Ovary (tissue), 10 donors: ENCODE measurements at regions of chr9 and their contacts with region 1.

Region 1: DNA sequence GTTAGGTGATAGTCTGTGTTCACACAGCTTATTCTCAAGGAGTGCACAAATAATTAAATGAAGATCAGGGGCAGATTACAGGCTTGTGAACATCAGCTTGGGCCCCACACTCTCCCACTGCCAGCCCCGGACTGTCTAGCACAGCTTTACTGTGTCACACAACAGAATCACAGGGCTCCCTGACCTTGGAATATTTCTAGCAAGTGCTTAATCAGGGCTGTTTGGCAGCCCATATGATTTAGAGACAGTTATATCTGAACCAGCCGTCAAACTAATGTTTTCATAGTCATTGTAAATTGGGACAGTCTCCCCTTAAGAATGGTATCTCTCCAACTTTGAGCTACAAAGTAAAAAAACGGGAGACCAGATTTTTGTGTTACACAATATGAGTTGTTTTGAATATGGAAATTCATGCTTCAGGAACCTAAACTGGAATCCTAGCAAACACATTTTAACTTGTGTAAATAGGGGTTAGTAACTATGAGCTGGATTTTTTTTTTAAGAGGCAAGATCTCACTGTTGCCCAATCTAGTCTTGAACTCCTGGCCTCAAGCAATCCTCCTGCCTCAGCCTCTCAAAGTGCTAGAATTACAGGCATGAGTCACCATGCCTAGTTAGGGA is 517.6 kb downstream of the BNC2 start:
- DNase-seq: peak in 4 of 5 donors; percentile 49 to 68 (median 65)
- H3K4me3 ChIP-seq: no peak overlapping the region
- H3K27ac ChIP-seq: peak overlapping the region in 1 of 2 donors; percentile 77
- H3K4me1 ChIP-seq: peaks cover 14% of the 10 kb centered on the region
- H3K27me3 ChIP-seq: no peaks in the 10 kb centered on the region
- CTCF ChIP-seq: no peak
- EP300 ChIP-seq: no peak
- POLR2A ChIP-seq: no peak

Region 2: GRCh38 chr9:15778861-15779260 is 574.0 kb before region 1 on chr9:
- intact Hi-C with region 1: no loop called
- DNase-seq: no peak
- H3K4me3 ChIP-seq: no peak overlapping the region
- H3K27ac ChIP-seq: no peak overlapping the region
- H3K4me1 ChIP-seq: no peaks in the 10 kb centered on the region
- H3K27me3 ChIP-seq: no peaks in the 10 kb centered on the region
- CTCF ChIP-seq: no peak
- EP300 ChIP-seq: no peak
- POLR2A ChIP-seq: no peak

Region 3: DNA sequence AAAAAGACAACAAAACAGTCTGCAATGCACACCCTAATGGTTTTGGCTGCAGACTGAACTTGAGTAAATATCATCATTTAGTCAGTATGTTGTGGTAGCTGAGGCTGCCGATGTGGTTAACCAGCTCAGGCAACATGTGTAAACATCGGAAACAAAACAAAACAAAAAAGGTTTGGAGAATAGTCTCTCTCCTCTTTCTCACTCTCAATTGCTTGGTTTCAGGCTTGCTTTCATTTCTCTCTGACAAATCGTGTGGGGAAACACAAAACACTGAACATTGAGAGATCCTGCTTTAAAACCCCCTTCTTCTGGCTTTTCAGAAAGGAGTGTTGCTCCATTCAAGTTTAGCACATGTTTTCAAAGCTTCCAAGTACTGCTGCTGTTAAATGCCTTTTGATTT is 64.3 kb after region 1 on chr9:
- intact Hi-C with region 1: loop called in 1 of 4 experiments (anchors 10 kb)
- DNase-seq: no peak
- H3K4me3 ChIP-seq: peak overlapping the region; percentile 1
- H3K27ac ChIP-seq: peak overlapping the region in 1 of 2 donors; percentile 65
- H3K4me1 ChIP-seq: peaks cover 21% of the 10 kb centered on the region
- H3K27me3 ChIP-seq: no peaks in the 10 kb centered on the region
- CTCF ChIP-seq: no peak
- EP300 ChIP-seq: no peak
- POLR2A ChIP-seq: no peak